Activated CD4-positive, alpha-beta T cell treated with anti-CD3 and anti-CD28 coated beads for 36 hours (primary cell): ENCODE measurements at regions of chr5 and their contacts with region 1.

Region 1: GRCh38 chr5:6576861-6577501 is 55.9 kb downstream of the NSUN2 start:
- DNase-seq: peak; percentile 39
- ATAC-seq: no peak
- H3K4me3 Mint-ChIP-seq: no peak overlapping the region
- H3K27ac Mint-ChIP-seq: no peak overlapping the region
- H3K4me1 Mint-ChIP-seq: no peaks in the 10 kb centered on the region
- H3K27me3 Mint-ChIP-seq: peaks cover 24% of the 10 kb centered on the region

Region 2: DNA sequence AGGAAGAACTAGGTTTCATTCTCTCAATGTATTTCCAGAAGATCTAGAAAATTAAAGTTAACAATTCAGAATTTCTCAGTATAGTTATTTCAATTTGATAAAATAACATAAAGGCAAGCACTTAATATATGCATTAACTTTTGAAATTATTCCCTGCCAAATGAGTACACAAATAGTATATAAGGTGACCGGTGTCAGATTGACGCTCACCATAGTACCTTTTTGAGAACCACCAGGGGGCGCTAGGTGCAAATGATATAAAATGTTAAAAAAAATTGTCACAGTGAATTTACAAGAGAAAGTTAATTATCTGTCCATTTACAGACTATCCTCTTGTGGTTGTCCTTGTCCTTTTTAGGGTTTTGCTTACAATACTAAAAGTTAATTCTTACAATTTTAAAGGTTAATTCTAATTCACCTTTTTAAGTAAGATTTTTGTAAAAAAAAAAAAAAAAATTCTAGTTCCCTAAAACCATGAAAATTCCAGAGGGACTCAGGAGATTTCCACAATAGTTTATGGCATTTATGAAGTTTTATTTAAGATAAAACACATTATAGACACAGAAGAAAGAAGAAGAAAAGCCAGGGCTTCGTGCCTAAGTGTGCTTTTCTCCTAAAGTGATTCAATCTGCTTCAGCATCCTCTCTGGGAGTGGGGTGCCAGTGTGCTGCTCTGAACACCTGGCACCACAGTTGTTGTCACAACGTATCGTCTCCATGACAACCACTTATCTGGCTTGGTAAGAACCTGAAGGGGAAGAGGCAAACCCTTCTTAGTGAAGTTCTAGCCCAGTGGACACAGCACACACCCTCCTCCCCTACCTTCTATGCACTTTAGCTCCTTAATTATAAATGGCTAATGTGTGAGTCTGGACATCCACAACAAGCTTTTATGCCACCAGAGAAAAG is 1435.1 kb before region 1 on chr5:
- CTCF ChIA-PET with region 1: no interaction called
- POLR2A ChIA-PET with region 1: no interaction called
- intact Hi-C with region 1: loop called in 1 of 2 experiments (anchors 5 kb)
- DNase-seq: peak; percentile 69
- ATAC-seq: no peak
- H3K4me3 Mint-ChIP-seq: no peak overlapping the region
- H3K27ac Mint-ChIP-seq: no peak overlapping the region
- H3K4me1 Mint-ChIP-seq: peaks cover 6% of the 10 kb centered on the region
- H3K27me3 Mint-ChIP-seq: peaks cover 22% of the 10 kb centered on the region

Region 3: GRCh38 chr5:5886812-5887486 is 690.0 kb before region 1 on chr5:
- CTCF ChIA-PET with region 1: no interaction called
- POLR2A ChIA-PET with region 1: no interaction called
- intact Hi-C with region 1: loop called (anchors 1 to 5 kb)
- DNase-seq: peak; percentile 71
- ATAC-seq: peak; percentile 80
- H3K4me3 Mint-ChIP-seq: no peak overlapping the region
- H3K27ac Mint-ChIP-seq: no peak overlapping the region
- H3K4me1 Mint-ChIP-seq: no peaks in the 10 kb centered on the region
- H3K27me3 Mint-ChIP-seq: peaks cover 14% of the 10 kb centered on the region

Region 4: GRCh38 chr5:6291961-6292360 is 285.0 kb before region 1 on chr5:
- CTCF ChIA-PET with region 1: no interaction called
- POLR2A ChIA-PET with region 1: no interaction called
- intact Hi-C with region 1: loop called in 1 of 2 experiments (anchors 1 kb)
- DNase-seq: peak; percentile 24
- ATAC-seq: peak; percentile 36
- H3K4me3 Mint-ChIP-seq: no peak overlapping the region
- H3K27ac Mint-ChIP-seq: no peak overlapping the region
- H3K4me1 Mint-ChIP-seq: no peaks in the 10 kb centered on the region
- H3K27me3 Mint-ChIP-seq: peaks cover 4% of the 10 kb centered on the region

Region 5: GRCh38 chr5:6448622-6449464 is 128.1 kb before region 1 on chr5 and contains the start of gene UBE2QL1:
- CTCF ChIA-PET with region 1: no interaction called
- POLR2A ChIA-PET with region 1: no interaction called
- intact Hi-C with region 1: loop called in 1 of 2 experiments (anchors 1 kb)
- DNase-seq: peak; percentile 38
- ATAC-seq: peak; percentile 61
- H3K4me3 Mint-ChIP-seq: peak within 1 kb of the TSS; percentile 61
- H3K27ac Mint-ChIP-seq: peak within 1 kb of the TSS; percentile 19
- H3K4me1 Mint-ChIP-seq: peaks cover 12% of the 10 kb centered on the region
- H3K27me3 Mint-ChIP-seq: peaks cover 40% of the 10 kb centered on the region
- total RNA-seq, gene UBE2QL1: not detected

Region 6: GRCh38 chr5:6556089-6556801 is 20.7 kb before region 1 on chr5:
- CTCF ChIA-PET with region 1: no interaction called
- POLR2A ChIA-PET with region 1: no interaction called
- intact Hi-C with region 1: no loop called
- DNase-seq: no peak
- ATAC-seq: no peak
- H3K4me3 Mint-ChIP-seq: no peak overlapping the region
- H3K27ac Mint-ChIP-seq: no peak overlapping the region
- H3K4me1 Mint-ChIP-seq: no peaks in the 10 kb centered on the region
- H3K27me3 Mint-ChIP-seq: peaks cover 5% of the 10 kb centered on the region